ENCODE measurements at regions of chr7 and their contacts with region 1.

Region 1: GRCh38 chr7:121500360-121501058 is 104.4 kb upstream of the FAM3C start:
- DNase-seq: no peak
- H3K4me3 Mint-ChIP-seq: no peak overlapping the region
- H3K27ac Mint-ChIP-seq: peak overlapping the region; percentile 90
- H3K4me1 Mint-ChIP-seq: peaks cover 41% of the 10 kb centered on the region
- H3K27me3 Mint-ChIP-seq: no peaks in the 10 kb centered on the region

Region 2: GRCh38 chr7:121278120-121279021 is 222.1 kb before region 1 on chr7:
- intact Hi-C with region 1: loop called (anchors 1 kb)
- DNase-seq: no peak
- H3K4me3 Mint-ChIP-seq: no peak overlapping the region
- H3K27ac Mint-ChIP-seq: no peak overlapping the region
- H3K4me1 Mint-ChIP-seq: peaks cover 18% of the 10 kb centered on the region
- H3K27me3 Mint-ChIP-seq: peaks cover 8% of the 10 kb centered on the region

Region 3: GRCh38 chr7:121313793-121314676 is 186.5 kb before region 1 on chr7:
- intact Hi-C with region 1: no loop called
- DNase-seq: no peak
- H3K4me3 Mint-ChIP-seq: no peak overlapping the region
- H3K27ac Mint-ChIP-seq: no peak overlapping the region
- H3K4me1 Mint-ChIP-seq: no peaks in the 10 kb centered on the region
- H3K27me3 Mint-ChIP-seq: peaks cover 10% of the 10 kb centered on the region

Region 4: DNA sequence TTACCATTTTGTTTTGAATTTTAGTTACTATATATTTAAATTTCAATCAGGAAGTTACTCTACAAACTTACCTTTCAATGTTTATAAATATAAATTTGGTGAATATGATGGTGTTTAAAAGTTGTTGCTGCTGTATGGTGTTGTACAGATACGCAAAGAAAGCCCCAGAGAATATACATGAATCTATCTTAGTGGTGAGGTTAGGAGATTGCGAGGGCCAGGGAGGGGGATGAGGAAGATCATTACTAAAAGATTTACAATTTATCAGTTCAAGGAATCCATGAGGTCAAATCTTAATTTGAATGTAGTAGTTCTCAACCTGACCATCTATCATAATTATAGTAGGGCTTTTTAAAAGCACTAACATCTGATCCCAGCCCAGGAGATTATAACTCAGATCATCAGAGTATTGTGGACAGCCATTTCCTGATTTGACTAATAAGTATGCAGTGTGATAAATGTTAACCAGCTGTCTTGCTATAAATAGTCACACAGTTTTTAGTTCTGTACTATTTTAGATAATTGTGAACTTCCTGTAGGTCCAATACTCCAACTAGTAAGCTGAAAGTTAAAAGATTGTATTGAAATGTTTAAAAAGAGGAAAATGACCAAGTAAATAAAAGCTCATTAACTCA is 128.0 kb before region 1 on chr7:
- intact Hi-C with region 1: loop called (anchors 1 kb)
- DNase-seq: no peak
- H3K4me3 Mint-ChIP-seq: peak overlapping the region; percentile 38
- H3K27ac Mint-ChIP-seq: peak overlapping the region; percentile 80
- H3K4me1 Mint-ChIP-seq: peaks cover 76% of the 10 kb centered on the region
- H3K27me3 Mint-ChIP-seq: no peaks in the 10 kb centered on the region

Region 5: DNA sequence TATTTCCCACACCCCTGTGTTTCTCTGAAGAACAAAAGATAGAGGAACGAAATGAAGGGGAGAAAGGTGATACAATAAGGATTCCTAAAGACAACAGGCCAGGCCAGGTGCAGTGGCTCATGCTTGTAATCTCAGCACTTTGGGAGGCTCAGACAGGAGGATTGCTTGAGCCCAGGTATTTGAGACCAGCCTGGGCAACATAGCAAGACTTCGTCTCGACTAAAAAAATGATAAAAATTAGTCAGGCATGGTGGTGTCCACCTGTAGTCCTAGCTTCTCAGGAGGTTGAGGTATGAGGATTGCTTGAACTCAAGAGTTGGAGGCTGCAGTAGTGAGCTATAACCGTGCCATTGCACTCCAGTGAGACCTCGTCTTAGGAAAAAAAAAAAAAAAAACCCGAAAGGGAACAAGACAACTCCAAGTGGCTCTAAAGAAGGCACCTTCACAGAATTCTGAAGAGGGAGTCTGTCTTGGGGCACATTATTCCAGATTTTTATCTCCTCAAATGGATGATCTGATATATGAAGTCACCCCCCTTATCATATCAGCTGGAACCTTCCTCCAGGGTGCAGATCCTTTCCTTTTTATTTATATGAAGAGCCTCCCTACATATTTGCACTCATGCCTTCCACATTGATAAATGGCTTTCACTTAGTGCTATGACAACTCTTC is 62.9 kb before region 1 on chr7:
- intact Hi-C with region 1: loop called (anchors 1 kb)
- DNase-seq: no peak
- H3K4me3 Mint-ChIP-seq: peak overlapping the region; percentile 68
- H3K27ac Mint-ChIP-seq: peak overlapping the region; percentile 85
- H3K4me1 Mint-ChIP-seq: peaks cover 41% of the 10 kb centered on the region
- H3K27me3 Mint-ChIP-seq: no peaks in the 10 kb centered on the region

Region 6: GRCh38 chr7:121485467-121486243 is 14.9 kb before region 1 on chr7:
- intact Hi-C with region 1: loop called (anchors 2 kb)
- DNase-seq: no peak
- H3K4me3 Mint-ChIP-seq: no peak overlapping the region
- H3K27ac Mint-ChIP-seq: no peak overlapping the region
- H3K4me1 Mint-ChIP-seq: peaks cover 17% of the 10 kb centered on the region
- H3K27me3 Mint-ChIP-seq: no peaks in the 10 kb centered on the region

Region 7: GRCh38 chr7:121519548-121520521 is 19.3 kb after region 1 on chr7:
- intact Hi-C with region 1: loop called (anchors 1 kb)
- DNase-seq: no peak
- H3K4me3 Mint-ChIP-seq: no peak overlapping the region
- H3K27ac Mint-ChIP-seq: peak overlapping the region; percentile 37
- H3K4me1 Mint-ChIP-seq: peaks cover 40% of the 10 kb centered on the region
- H3K27me3 Mint-ChIP-seq: no peaks in the 10 kb centered on the region

Region 8: DNA sequence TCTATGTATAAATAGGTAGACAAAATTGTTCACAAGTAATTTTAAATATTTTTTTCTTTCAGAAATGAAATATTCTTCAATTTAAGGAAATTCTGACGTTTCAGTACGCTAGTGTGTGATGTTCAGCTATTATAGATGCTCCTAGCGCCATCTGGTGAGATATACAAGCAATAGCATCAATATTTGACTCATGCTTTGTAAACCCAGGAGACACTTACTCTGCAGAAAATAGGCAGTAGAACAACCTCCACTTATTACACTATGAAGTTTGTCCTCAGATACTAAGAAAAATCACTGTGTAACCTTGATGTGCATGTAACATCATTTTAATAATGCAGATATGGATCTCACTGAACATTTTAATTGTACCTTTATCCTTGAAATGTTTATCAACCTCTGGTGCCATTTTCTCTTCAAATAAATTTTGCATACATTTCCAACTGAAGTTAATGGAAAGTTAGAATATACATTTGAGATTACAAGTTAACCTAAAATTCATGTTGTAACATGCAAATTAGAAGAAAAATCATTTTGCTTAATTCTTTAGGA is 47.1 kb after region 1 on chr7:
- intact Hi-C with region 1: loop called (anchors 1 kb)
- DNase-seq: no peak
- H3K4me3 Mint-ChIP-seq: no peak overlapping the region
- H3K27ac Mint-ChIP-seq: no peak overlapping the region
- H3K4me1 Mint-ChIP-seq: peaks cover 39% of the 10 kb centered on the region
- H3K27me3 Mint-ChIP-seq: peaks cover 9% of the 10 kb centered on the region

Region 9: GRCh38 chr7:121730869-121731268 is 230.4 kb after region 1 on chr7:
- intact Hi-C with region 1: no loop called
- DNase-seq: no peak
- H3K4me3 Mint-ChIP-seq: no peak overlapping the region
- H3K27ac Mint-ChIP-seq: no peak overlapping the region
- H3K4me1 Mint-ChIP-seq: no peaks in the 10 kb centered on the region
- H3K27me3 Mint-ChIP-seq: no peaks in the 10 kb centered on the region